GM10248 (cell line): ENCODE measurements at regions of chr15 and their contacts with region 1.

Region 1: GRCh38 chr15:45660231-45660979 is 25.6 kb downstream of the SQOR start:
- DNase-seq: peak; percentile 39
- CTCF ChIP-seq: peak; percentile 17

Region 2: DNA sequence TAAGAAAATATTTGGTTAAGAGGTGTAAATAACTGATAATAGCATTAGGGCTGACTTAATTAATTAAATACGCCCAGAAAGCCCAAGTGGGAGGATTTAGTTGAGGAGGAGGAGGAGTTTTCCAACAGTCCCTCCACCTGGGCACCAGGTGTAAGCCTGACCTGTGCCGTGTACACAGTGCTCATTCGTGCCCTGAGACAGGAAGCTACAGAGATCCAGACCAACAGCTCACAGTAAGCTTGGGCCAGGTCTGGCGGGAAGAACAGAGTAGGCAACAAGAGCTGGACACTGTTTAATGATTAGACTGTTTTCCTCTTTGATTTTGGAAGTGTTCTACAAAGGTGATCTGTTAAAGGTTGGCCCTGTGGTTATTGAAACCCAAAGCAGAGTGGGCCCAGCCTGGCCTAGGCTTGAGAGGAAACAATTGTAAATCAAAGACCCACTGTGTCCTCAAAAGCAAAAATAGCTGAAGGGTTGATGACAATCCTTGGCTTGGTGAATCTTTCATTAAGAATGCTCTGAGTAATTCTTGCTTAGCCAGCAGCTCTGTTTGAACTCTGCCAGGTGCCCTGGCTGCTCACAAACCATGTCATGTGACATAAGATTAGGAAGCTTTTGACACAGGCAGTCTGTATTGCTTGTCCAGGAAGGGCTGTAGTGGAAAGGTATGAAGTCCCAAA is 11.7 kb before region 1 on chr15:
- CTCF ChIA-PET with region 1: interaction called, 33 read pairs
- POLR2A ChIA-PET with region 1: no interaction called
- DNase-seq: no peak
- CTCF ChIP-seq: no peak

Region 3: DNA sequence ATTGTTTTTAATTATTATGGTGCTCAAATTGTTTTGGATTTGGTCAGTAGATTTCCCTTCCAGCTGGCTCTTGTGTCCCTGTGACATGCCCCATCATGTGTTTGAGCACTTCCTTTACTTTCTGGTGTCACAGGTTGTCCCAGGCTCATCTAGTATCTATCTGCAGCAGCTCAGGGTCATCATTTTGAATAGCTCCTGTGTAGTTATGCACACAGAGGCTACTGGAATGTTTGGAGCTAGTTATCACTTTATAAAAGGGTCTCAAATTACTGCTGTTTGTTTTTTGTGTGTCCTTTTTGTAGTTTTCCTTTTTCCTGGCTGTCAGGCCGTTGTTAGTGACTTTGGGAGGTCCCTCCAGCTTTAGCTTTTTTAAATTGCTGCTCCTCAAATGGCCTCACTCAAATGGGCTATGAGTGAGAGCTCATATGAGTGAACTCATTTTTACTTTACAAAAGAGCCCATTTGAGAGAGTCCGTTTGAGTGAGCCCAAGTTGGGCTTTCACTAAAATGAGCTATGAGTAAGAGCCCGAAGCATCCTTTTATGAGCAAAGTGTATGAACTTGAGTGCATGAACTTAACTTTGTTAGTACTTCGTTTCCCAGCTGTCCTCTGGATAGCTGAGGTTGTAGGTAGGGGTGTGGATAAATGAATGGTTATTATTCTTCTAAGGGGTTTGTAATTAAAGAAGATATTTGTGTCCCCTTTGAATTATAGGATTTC is 18.2 kb after region 1 on chr15:
- CTCF ChIA-PET with region 1: interaction called, 13 read pairs
- POLR2A ChIA-PET with region 1: no interaction called
- DNase-seq: no peak
- CTCF ChIP-seq: no peak